ENCODE measurements at regions of chr20 and their contacts with region 1.

Region 1: GRCh38 chr20:44702776-44703175 is 12.4 kb upstream of the CCN5 start:
- DNase-seq: no peak
- ATAC-seq: no peak
- H3K4me3 ChIP-seq: no peak overlapping the region
- H3K27ac ChIP-seq: peak overlapping the region; percentile 40 to 79; a peak in 4 of 6 replicates
- H3K4me1 ChIP-seq: peaks cover 47% of the 10 kb centered on the region
- CTCF ChIP-seq: no peak
- EP300 ChIP-seq: no peak
- POLR2A ChIP-seq: no peak
- RAD21 ChIP-seq: no peak

Region 2: GRCh38 chr20:44720617-44720993 is 17.8 kb after region 1 on chr20:
- CTCF ChIA-PET with region 1: interaction called, 24 read pairs
- POLR2A ChIA-PET with region 1: no interaction called
- DNase-seq: peak; percentile 96 to 97
- ATAC-seq: peak; percentile 94 to 95
- H3K4me3 ChIP-seq: no peak overlapping the region
- H3K27ac ChIP-seq: peak overlapping the region; percentile 96 to 98
- H3K4me1 ChIP-seq: peaks cover 86% of the 10 kb centered on the region
- CTCF ChIP-seq: no peak
- EP300 ChIP-seq: no peak; a peak in 1 of 5 replicates
- POLR2A ChIP-seq: no peak
- RAD21 ChIP-seq: no peak; a peak in 1 of 5 replicates

Region 3: GRCh38 chr20:44765652-44766347 is 63.0 kb after region 1 on chr20:
- CTCF ChIA-PET with region 1: no interaction called
- POLR2A ChIA-PET with region 1: no interaction called
- DNase-seq: peak in 1 of 2 experiments; percentile 37
- ATAC-seq: peak; percentile 44 to 61; a peak in 4 of 6 replicates
- H3K4me3 ChIP-seq: no peak overlapping the region
- H3K27ac ChIP-seq: no peak overlapping the region
- H3K4me1 ChIP-seq: no peaks in the 10 kb centered on the region
- CTCF ChIP-seq: no peak
- EP300 ChIP-seq: no peak
- POLR2A ChIP-seq: no peak
- RAD21 ChIP-seq: no peak

Region 4: DNA sequence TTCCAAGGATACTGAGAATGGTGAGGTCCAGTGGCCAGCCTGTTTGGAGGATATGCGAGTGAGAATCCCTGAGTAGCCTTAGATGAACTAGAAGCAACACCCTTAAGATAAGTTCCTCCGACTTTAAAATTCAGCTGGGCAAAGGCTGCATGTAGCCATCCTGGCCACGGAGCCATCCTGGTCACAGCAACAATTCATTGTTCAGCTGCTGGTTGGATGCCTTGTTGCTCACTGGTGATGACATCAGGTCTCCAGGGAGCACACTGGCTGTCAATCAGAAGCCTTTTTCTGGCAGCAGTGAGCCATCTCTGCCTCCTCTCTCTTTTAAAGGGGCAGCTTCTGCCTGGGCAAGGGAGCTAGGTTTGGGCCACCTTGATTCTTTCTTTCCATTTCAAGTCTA is 129.9 kb after region 1 on chr20:
- CTCF ChIA-PET with region 1: no interaction called
- POLR2A ChIA-PET with region 1: no interaction called
- DNase-seq: peak in 1 of 2 experiments; percentile 51
- ATAC-seq: peak; percentile 85; a peak in 5 of 6 replicates
- H3K4me3 ChIP-seq: no peak overlapping the region
- H3K27ac ChIP-seq: no peak overlapping the region
- H3K4me1 ChIP-seq: no peaks in the 10 kb centered on the region
- CTCF ChIP-seq: no peak
- EP300 ChIP-seq: no peak
- POLR2A ChIP-seq: no peak
- RAD21 ChIP-seq: no peak

Measured in A549 (cell line).